Naive thymus-derived CD8-positive, alpha-beta T cell (primary cell): ENCODE measurements at regions of chr5 and their contacts with region 1.

Region 1: DNA sequence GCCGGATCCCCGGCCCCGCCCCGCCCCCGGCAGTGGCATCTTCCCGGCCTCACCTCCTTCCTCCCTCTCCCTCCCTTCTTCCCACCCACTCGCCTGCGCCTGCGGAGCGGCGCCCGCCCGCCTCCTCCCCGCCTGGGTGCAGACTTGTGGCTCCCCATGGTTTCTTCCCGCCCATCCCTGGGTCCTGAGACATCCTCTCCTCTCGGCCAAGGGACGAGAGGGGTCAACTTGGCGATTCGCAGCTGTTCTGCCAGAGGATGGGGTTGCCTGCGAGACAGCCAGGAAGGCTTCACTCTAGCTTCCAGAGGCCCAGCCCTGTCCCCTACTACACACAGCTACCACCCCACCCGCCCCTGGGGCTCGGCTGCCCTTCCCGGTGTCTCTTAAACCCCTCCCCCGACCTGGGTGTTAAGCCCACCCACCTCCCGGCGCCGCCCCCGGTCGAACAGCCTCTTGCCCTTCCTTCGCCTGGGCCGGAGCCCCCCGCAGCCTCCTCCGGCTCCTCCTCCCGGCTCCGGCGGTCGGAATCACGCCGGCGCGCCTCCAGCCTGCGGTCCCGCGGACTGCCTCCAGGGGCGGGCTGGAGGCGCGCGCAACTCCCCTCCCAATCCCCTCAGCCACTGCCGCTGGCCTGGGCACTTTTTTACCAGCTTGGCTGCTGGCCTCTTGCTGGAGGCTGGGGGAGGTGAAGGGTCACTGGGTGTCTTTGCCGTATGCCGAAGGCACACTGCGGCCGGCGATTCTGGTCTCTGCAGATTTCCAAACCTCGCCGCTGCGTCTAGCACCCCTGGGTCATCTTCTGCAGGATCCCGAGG is 1.9 kb downstream of the JADE2 start:
- DNase-seq: peak; percentile 57 to 85 (median 72)
- ATAC-seq: peak; percentile 21 to 28
- H3K4me3 Mint-ChIP-seq: peak overlapping the region; percentile 90 to 100 (median 94)
- H3K27ac Mint-ChIP-seq: peak overlapping the region; percentile 78 to 100 (median 94)
- H3K4me1 Mint-ChIP-seq: peaks cover 37 to 55% (median 53%) of the 10 kb centered on the region in 4 donors
- H3K27me3 Mint-ChIP-seq: no peaks in the 10 kb centered on the region

Region 2: GRCh38 chr5:134113902-134114875 is 413.2 kb before region 1 on chr5 and contains the start of gene TCF7:
- POLR2A ChIA-PET with region 1: interaction called, 10 read pairs
- DNase-seq: peak; percentile 76 to 91 (median 86)
- ATAC-seq: peak; percentile 59 to 72
- H3K4me3 Mint-ChIP-seq: peak within 1 kb of the TSS; percentile 94 to 100 (median 98)
- H3K27ac Mint-ChIP-seq: peak within 1 kb of the TSS; percentile 91 to 99 (median 98)
- H3K4me1 Mint-ChIP-seq: peaks cover 35 to 65% (median 51%) of the 10 kb centered on the region in 4 donors
- H3K27me3 Mint-ChIP-seq: peaks cover 0 to 4% (median 0%) of the 10 kb centered on the region in 5 donors
- polyA plus RNA-seq, gene TCF7: 207 to 600 (median 328) TPM

Region 3: DNA sequence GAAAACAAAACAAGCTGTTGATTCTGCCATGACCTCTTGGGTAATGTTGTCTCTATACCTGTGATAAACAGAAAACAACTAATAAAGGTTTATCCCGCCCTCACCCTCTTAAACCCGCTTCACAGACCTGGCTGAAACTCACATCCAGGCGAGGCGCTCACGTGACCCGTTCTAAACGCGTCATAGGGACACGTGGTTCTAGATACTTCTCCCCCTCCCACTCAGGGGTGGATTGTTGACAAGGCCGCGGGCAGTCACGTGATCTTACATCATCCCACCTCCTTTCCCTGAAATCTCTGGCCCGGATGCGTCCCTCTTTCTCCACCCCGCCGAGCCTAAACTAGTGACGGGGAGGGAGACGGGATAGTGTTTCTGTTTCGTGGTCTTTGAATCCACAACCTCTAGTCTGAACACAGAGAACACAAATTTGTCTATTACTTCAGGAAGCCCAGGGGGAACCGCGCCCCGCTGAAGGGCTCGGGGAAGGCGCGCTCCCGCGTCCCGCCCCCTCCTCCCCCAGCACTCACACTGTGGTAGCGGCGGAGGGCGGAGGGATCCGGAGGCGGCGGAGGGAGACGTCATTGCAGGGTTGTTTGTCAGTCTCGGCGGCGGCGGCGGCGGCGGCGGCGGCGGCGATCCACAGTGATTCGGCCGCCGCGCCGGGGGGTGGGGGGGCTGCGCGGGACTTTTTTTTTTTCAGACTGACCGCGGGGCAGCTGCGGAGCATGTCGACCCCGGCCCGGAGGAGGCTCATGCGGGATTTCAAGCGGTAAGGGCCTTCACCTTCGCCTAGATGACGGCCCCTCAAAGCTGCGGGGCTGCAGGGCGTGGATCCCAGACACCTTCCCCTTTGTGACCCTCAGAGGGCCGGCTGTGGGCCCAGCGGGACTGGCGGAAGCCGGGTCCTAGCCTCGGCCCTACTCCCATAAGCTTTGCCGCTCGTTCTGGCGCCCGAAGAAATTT is 156.2 kb before region 1 on chr5 and contains the start of gene UBE2B:
- POLR2A ChIA-PET with region 1: interaction called, 121 read pairs
- DNase-seq: peak; percentile 94 to 99 (median 97)
- ATAC-seq: peak; percentile 68 to 75
- H3K4me3 Mint-ChIP-seq: peak within 1 kb of the TSS; percentile 88 to 99 (median 98)
- H3K27ac Mint-ChIP-seq: peak within 1 kb of the TSS; percentile 91 to 100 (median 100)
- H3K4me1 Mint-ChIP-seq: peaks cover 22 to 70% (median 61%) of the 10 kb centered on the region in 4 donors
- H3K27me3 Mint-ChIP-seq: peaks cover 0 to 3% (median 0%) of the 10 kb centered on the region in 5 donors
- polyA plus RNA-seq, gene UBE2B: 55.2 to 80.3 (median 77.6) TPM

Region 4: GRCh38 chr5:134436523-134437339 is 90.6 kb before region 1 on chr5:
- POLR2A ChIA-PET with region 1: interaction called, 29 read pairs
- DNase-seq: peak in 9 of 10 donors; percentile 29 to 85 (median 69)
- ATAC-seq: peak; percentile 92 to 94
- H3K4me3 Mint-ChIP-seq: peak overlapping the region; percentile 12 to 81 (median 56)
- H3K27ac Mint-ChIP-seq: peak overlapping the region; percentile 40 to 91 (median 82)
- H3K4me1 Mint-ChIP-seq: peaks cover 8 to 21% (median 13%) of the 10 kb centered on the region in 4 donors
- H3K27me3 Mint-ChIP-seq: peaks cover 0 to 7% (median 2%) of the 10 kb centered on the region in 5 donors

Region 5: DNA sequence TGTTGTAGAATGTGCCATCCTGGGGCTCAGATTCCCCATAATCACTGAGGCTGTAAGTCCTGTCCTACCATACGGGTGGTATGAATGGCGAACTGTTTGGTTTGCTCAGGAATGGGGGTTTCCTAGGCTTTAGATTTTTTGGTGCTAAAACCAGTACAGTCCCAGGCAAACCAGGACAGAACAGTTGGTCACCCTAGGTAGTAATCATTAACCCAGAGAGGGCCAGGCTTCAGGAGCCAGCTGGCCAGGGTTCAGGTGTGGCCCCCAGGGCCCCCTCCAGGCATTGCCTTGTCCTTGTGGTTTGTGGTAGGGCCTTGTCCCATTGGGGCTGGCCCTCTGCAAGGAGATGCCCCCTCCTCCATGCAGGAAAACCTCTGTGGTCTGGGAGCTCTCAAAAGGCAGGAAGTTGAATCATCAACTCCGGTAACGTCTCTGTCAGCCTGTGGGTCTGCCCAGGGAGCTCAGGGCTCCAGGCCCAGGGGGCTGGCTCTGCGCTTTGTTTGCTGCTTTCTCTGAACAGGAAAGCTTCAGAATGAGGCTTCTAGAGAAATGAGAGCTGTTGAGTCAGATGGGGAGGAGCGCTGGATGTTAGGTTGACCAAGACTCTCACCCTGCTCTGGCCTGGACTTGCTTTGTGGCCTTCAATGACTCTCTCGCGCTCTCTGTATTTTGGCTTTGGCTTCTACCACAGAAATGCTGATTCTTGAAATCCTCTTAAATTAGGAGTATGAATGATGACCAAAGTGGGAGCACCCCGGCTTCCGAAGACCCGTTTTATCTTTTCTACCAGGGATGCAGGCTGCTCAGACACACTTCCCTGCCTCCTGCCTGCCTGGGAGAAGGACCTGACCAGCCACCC is 24.0 kb before region 1 on chr5:
- POLR2A ChIA-PET with region 1: interaction called, 14 read pairs
- DNase-seq: peak in 9 of 10 donors; percentile 9 to 70 (median 19)
- ATAC-seq: peak; percentile 86 to 95
- H3K4me3 Mint-ChIP-seq: peak overlapping the region in 9 of 10 donors; percentile 6 to 67 (median 53)
- H3K27ac Mint-ChIP-seq: peak overlapping the region; percentile 29 to 94 (median 88)
- H3K4me1 Mint-ChIP-seq: peaks cover 14 to 22% (median 19%) of the 10 kb centered on the region in 4 donors
- H3K27me3 Mint-ChIP-seq: no peaks in the 10 kb centered on the region

Region 6: DNA sequence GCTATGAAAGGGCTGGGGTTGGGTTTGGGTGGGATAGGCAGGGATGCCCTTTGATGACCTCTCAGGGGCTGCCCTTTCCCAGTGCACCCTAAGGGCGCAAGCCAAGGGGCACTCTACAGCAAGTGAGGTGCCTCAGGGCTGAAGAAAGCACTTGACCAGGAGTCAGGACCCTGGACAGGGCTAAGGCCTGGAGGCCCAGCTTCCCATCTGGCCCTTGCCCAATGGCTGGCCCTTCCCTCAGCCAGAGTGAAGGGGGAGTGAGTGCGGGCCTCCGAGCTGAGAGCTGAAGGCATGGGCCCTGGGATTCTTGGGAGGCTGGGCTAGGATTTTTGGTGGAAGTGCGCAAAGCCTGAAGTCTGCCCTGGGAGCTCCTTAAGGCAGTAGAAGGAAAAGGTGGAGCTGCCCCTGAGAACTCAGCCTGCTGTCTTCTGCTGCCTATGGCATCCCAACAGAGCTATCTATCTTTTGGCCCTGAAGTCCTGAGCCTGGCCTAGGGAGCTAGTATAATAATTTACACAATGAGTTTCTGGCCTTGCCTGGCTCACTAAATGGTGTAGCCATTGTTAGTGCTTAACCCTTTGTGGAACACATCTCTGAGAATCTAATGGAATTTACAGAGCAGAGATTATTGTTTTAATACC is 14.5 kb after region 1 on chr5:
- POLR2A ChIA-PET with region 1: interaction called, 70 read pairs
- DNase-seq: no peak
- ATAC-seq: no peak
- H3K4me3 Mint-ChIP-seq: no peak overlapping the region
- H3K27ac Mint-ChIP-seq: peak overlapping the region in 5 of 10 donors; percentile 19 to 75 (median 23)
- H3K4me1 Mint-ChIP-seq: peaks cover 18 to 75% (median 49%) of the 10 kb centered on the region in 4 donors
- H3K27me3 Mint-ChIP-seq: no peaks in the 10 kb centered on the region

Region 7: GRCh38 chr5:134708301-134708700 is 180.9 kb after region 1 on chr5:
- POLR2A ChIA-PET with region 1: no interaction called
- DNase-seq: no peak
- ATAC-seq: no peak
- H3K4me3 Mint-ChIP-seq: no peak overlapping the region
- H3K27ac Mint-ChIP-seq: peak overlapping the region in 1 of 10 donors; percentile 42
- H3K4me1 Mint-ChIP-seq: no peaks in the 10 kb centered on the region
- H3K27me3 Mint-ChIP-seq: no peaks in the 10 kb centered on the region

Region 8: DNA sequence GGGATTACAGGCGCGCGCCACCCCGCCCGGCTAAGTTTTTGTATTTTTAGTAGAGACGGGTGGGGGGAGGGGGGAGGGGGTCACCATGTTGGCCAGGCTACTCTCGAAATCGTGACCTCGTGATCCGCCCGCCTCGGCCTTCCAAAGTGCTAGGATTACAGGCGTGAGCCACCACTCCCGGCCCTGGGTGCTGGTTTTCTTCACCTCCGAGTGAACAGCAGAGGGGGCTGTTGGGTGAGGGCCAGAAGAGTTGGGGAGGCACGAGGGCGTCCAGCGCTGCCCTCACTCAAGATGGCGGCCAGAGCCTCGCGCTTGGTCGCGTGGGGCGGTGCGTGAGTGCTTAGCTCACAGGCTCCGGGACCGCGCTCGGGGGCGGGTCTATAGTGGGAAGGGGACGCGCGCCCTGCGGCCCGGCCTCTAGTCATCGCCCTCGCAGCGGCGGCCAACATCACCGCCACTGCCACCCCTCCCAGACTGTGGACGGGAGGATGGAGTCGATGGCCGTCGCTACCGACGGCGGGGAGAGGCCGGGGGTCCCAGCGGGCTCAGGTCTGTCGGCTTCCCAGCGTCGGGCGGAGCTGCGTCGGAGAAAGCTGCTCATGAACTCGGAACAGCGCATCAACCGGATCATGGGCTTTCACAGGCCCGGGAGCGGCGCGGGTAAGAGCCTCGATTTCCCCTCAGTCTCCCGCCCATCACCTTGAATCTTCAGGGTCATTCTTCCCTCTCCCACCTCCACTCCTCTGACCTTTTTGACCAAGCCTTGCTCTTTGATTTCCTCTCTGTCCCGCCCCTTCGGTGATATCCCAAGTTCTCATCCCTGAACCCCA is 211.0 kb after region 1 on chr5 and contains the start of gene CAMLG:
- POLR2A ChIA-PET with region 1: interaction called, 15 read pairs
- DNase-seq: peak; percentile 91 to 98 (median 96)
- ATAC-seq: peak; percentile 96
- H3K4me3 Mint-ChIP-seq: peak within 1 kb of the TSS; percentile 86 to 100 (median 95)
- H3K27ac Mint-ChIP-seq: peak within 1 kb of the TSS; percentile 67 to 99 (median 94)
- H3K4me1 Mint-ChIP-seq: peaks cover 7 to 45% (median 36%) of the 10 kb centered on the region in 4 donors
- H3K27me3 Mint-ChIP-seq: no peaks in the 10 kb centered on the region
- polyA plus RNA-seq, gene CAMLG: 38.1 to 39.3 (median 38.8) TPM